ENCODE measurements at regions of chrX and their contacts with region 1.

Region 1: DNA sequence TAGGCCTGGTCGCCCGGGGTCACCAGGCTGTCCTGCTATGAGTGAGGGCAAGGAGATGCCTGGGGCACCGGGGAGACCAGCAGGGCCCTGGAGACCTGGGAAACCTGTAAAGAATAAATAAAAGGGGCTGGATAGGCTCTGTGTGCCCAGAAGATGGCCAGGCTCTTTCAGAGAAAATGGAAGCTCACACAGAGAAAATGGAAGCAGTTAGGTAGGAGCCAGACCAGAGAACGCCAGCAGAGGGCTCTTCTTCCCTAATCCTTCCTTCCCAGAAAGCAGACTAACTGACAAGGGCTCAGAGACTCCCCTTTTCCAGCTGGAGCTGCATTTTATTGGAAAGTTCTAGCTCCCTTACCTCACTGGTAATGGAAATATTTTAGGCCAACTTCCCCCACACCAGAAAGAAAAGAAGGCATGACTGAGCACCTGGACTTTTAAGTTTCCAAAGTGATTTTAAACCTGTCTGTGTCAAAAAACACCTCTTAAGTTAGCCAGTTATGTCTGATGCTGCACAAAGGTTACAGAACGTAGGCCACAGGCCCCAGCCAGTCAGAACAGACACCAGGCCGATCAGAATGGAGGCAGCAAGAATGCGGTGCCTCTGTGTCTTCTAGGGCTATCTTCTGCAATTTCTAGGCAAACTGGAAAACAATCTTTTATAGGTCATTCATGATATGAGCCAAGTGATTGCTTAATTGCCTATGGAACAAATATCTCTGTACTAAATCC is 74.0 kb downstream of the ATG4A start:
- DNase-seq: peak; percentile 12
- H3K4me3 ChIP-seq: no peak overlapping the region
- H3K27ac ChIP-seq: no peak overlapping the region
- H3K4me1 ChIP-seq: peaks cover 7% of the 10 kb centered on the region
- H3K27me3 ChIP-seq: no peaks in the 10 kb centered on the region
- CTCF ChIP-seq: peak; percentile 13 to 41
- POLR2A ChIP-seq: no peak

Region 2: DNA sequence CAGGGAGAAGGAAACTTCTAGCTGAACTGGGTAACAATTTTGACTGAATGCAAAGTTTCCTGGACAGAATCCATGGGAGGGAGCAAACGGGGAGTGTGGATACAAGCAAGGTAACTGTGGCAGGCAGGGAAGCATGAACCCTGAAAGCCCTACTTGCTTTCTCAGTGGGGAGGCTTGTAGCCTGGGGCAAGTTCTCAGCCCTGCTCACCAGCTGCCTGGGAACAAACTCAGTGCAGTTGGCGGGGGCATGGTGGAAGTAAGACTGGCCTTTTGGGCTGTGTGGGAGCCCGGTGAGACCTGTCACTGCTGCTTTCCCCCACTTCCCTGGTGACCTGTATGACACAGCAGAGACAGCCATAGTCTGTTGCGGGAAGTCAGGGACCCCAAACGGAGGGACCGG is 169.4 kb before region 1 on chrX:
- CTCF ChIA-PET with region 1: no interaction called
- POLR2A ChIA-PET with region 1: no interaction called
- dilution Hi-C with region 1: no loop called
- intact Hi-C with region 1: no loop called
- DNase-seq: no peak
- H3K4me3 ChIP-seq: no peak overlapping the region
- H3K27ac ChIP-seq: no peak overlapping the region
- H3K4me1 ChIP-seq: no peaks in the 10 kb centered on the region
- H3K27me3 ChIP-seq: no peaks in the 10 kb centered on the region
- CTCF ChIP-seq: no peak
- POLR2A ChIP-seq: no peak

Region 3: GRCh38 chrX:108097380-108097779 is 68.2 kb before region 1 on chrX:
- CTCF ChIA-PET with region 1: no interaction called
- POLR2A ChIA-PET with region 1: no interaction called
- dilution Hi-C with region 1: no loop called
- intact Hi-C with region 1: no loop called
- DNase-seq: peak; percentile 31
- H3K4me3 ChIP-seq: no peak overlapping the region
- H3K27ac ChIP-seq: no peak overlapping the region
- H3K4me1 ChIP-seq: peaks cover 18% of the 10 kb centered on the region
- H3K27me3 ChIP-seq: no peaks in the 10 kb centered on the region
- CTCF ChIP-seq: no peak
- POLR2A ChIP-seq: no peak

Region 4: GRCh38 chrX:108304210-108304609 is 138.7 kb after region 1 on chrX:
- CTCF ChIA-PET with region 1: interaction called, 26 read pairs
- POLR2A ChIA-PET with region 1: no interaction called
- dilution Hi-C with region 1: no loop called
- intact Hi-C with region 1: loop called (anchors 2 kb)
- DNase-seq: peak; percentile 30
- H3K4me3 ChIP-seq: no peak overlapping the region
- H3K27ac ChIP-seq: no peak overlapping the region
- H3K4me1 ChIP-seq: no peaks in the 10 kb centered on the region
- H3K27me3 ChIP-seq: no peaks in the 10 kb centered on the region
- CTCF ChIP-seq: peak in 1 of 2 donors; percentile 26
- POLR2A ChIP-seq: no peak

Region 5: DNA sequence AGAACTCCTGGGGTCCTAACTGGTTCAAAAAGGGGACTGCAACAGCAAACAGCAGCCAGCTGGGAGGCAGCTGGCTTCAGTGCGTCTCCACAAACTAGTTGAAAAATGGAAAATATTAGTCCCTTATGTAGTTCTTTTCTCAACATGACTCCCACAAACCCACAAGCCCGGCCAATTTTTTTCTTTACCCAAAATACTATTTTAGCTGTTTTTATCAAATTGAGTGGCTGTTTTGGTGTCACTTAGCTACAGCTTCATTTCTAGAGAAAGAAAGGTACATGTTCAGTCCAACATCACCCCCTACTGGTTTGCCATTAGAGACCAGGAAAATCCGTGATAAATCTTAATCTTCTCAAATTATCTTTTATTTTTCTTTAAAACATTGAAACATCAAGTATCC is 1219.2 kb after region 1 on chrX:
- CTCF ChIA-PET with region 1: interaction called, 17 read pairs
- POLR2A ChIA-PET with region 1: no interaction called
- dilution Hi-C with region 1: no loop called
- intact Hi-C with region 1: no loop called
- DNase-seq: peak; percentile 28
- H3K4me3 ChIP-seq: no peak overlapping the region
- H3K27ac ChIP-seq: no peak overlapping the region
- H3K4me1 ChIP-seq: no peaks in the 10 kb centered on the region
- H3K27me3 ChIP-seq: peaks cover 0 to 1% of the 10 kb centered on the region in 2 experiments
- CTCF ChIP-seq: peak; percentile 10 to 29
- POLR2A ChIP-seq: no peak

Measured in endothelial cell of umbilical vein (primary cell).